Caco-2 (cell line): ENCODE measurements at regions of chr1 and their contacts with region 1.

Region 1: DNA sequence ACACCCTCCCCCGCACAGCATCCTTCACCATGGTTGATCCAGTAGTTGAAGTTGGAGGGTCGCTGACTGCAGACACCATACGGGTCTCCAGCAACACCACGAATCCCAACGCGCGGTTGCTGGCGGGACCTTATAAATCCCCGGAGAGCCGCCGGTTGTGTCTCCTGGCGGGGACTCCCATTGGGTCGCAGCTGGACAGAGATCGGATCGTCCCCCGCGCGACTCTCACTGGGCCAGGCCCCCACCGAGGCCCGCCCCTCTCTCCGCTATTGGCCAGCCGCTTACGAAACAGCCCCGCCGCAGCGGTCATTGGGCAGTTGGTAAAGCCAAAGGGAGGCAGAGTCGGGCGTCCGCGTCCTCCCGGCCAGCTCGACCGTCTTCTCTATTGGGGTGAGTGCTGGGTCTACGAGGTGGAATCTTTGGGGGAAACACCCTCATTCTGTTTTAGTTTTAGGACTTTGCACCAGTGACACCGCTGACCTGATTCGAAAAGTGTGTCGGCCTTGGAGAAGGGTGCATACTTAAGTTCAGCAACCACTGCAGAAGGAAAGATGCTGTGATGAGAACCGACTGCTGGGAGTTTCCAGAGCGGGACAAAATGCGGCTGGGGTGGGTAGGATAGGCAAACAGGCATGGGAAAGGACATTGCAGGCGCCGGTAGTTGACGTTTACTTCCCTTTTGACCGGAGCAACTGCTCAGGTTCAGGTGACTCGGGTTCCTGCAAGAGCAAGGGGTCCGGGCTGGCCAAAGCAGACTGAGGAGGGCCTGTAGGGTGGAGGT is 27.3 kb downstream of the RABIF start:
- DNase-seq: peak; percentile 96 to 97
- H3K4me3 ChIP-seq: peak overlapping the region; percentile 97
- H3K4me3 Mint-ChIP-seq: peak overlapping the region; percentile 97
- H3K27ac Mint-ChIP-seq: peak overlapping the region; percentile 95
- H3K4me1 ChIP-seq: peaks cover 62% of the 10 kb centered on the region
- H3K4me1 Mint-ChIP-seq: peaks cover 37% of the 10 kb centered on the region
- H3K27me3 ChIP-seq: no peaks in the 10 kb centered on the region
- H3K27me3 Mint-ChIP-seq: no peaks in the 10 kb centered on the region
- CTCF ChIP-seq: no peak

Region 2: DNA sequence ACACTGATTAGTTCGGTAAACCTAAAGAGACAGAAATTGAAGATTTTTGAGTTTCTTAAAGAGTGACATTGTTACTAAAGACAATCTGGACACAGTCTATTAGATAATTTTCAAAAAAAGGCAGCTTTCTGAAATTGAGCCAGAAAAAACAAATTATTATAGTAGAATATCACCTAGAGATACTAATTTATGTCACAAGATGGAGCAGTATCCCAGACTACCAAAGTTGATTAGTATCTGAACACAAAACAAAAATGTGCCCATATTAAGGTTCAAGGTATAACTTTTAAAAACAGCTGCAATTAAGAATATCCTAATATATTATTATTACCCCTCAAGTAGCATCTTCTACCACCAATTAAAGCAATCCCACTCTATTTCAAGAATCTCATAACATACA is 110.9 kb before region 1 on chr1:
- CTCF ChIA-PET with region 1: interaction called, 4 read pairs
- POLR2A ChIA-PET with region 1: no interaction called
- intact Hi-C with region 1: loop called (anchors 5 kb)
- DNase-seq: no peak
- H3K4me3 ChIP-seq: no peak overlapping the region
- H3K4me3 Mint-ChIP-seq: no peak overlapping the region
- H3K27ac Mint-ChIP-seq: no peak overlapping the region
- H3K4me1 ChIP-seq: no peaks in the 10 kb centered on the region
- H3K4me1 Mint-ChIP-seq: no peaks in the 10 kb centered on the region
- H3K27me3 ChIP-seq: no peaks in the 10 kb centered on the region
- H3K27me3 Mint-ChIP-seq: no peaks in the 10 kb centered on the region
- CTCF ChIP-seq: no peak

Region 3: GRCh38 chr1:202786804-202787203 is 74.8 kb before region 1 on chr1:
- CTCF ChIA-PET with region 1: no interaction called
- POLR2A ChIA-PET with region 1: no interaction called
- intact Hi-C with region 1: no loop called
- DNase-seq: no peak
- H3K4me3 ChIP-seq: no peak overlapping the region
- H3K4me3 Mint-ChIP-seq: no peak overlapping the region
- H3K27ac Mint-ChIP-seq: no peak overlapping the region
- H3K4me1 ChIP-seq: peaks cover 9% of the 10 kb centered on the region
- H3K4me1 Mint-ChIP-seq: peaks cover 18% of the 10 kb centered on the region
- H3K27me3 ChIP-seq: no peaks in the 10 kb centered on the region
- H3K27me3 Mint-ChIP-seq: no peaks in the 10 kb centered on the region
- CTCF ChIP-seq: no peak

Region 4: GRCh38 chr1:202888531-202889360 is 27.1 kb after region 1 on chr1 and contains the start of gene RABIF:
- CTCF ChIA-PET with region 1: interaction called, 7 read pairs
- POLR2A ChIA-PET with region 1: interaction called, 15 read pairs
- intact Hi-C with region 1: loop called (anchors 1 kb)
- DNase-seq: peak; percentile 96 to 97
- H3K4me3 ChIP-seq: peak within 1 kb of the TSS; percentile 52
- H3K4me3 Mint-ChIP-seq: peak within 1 kb of the TSS; percentile 80
- H3K27ac Mint-ChIP-seq: peak within 1 kb of the TSS; percentile 87
- H3K4me1 ChIP-seq: 0 out of 2 replicates have a peak, but pooled peaks cover 4% of the 10 kb centered on the region
- H3K4me1 Mint-ChIP-seq: peaks cover 15% of the 10 kb centered on the region
- H3K27me3 ChIP-seq: no peaks in the 10 kb centered on the region
- H3K27me3 Mint-ChIP-seq: no peaks in the 10 kb centered on the region
- CTCF ChIP-seq: peak in 1 of 2 experiments; percentile 41
- total RNA-seq, gene RABIF: 9.2 and 9.6 TPM in 2 replicates

Region 5: GRCh38 chr1:202957733-202958543 is 96.3 kb after region 1 on chr1 and contains the start of gene ADIPOR1:
- CTCF ChIA-PET with region 1: no interaction called
- POLR2A ChIA-PET with region 1: interaction called, 3 read pairs
- intact Hi-C with region 1: loop called (anchors 2 kb)
- DNase-seq: peak; percentile 94 to 95
- H3K4me3 ChIP-seq: peak within 1 kb of the TSS; percentile 75
- H3K4me3 Mint-ChIP-seq: peak within 1 kb of the TSS; percentile 82
- H3K27ac Mint-ChIP-seq: peak within 1 kb of the TSS; percentile 49
- H3K4me1 ChIP-seq: peaks cover 18% of the 10 kb centered on the region
- H3K4me1 Mint-ChIP-seq: peaks cover 20% of the 10 kb centered on the region
- H3K27me3 ChIP-seq: no peaks in the 10 kb centered on the region
- H3K27me3 Mint-ChIP-seq: no peaks in the 10 kb centered on the region
- CTCF ChIP-seq: peak in 1 of 2 experiments; percentile 31
- total RNA-seq, gene ADIPOR1: 68.3 and 71.4 TPM in 2 replicates

Region 6: DNA sequence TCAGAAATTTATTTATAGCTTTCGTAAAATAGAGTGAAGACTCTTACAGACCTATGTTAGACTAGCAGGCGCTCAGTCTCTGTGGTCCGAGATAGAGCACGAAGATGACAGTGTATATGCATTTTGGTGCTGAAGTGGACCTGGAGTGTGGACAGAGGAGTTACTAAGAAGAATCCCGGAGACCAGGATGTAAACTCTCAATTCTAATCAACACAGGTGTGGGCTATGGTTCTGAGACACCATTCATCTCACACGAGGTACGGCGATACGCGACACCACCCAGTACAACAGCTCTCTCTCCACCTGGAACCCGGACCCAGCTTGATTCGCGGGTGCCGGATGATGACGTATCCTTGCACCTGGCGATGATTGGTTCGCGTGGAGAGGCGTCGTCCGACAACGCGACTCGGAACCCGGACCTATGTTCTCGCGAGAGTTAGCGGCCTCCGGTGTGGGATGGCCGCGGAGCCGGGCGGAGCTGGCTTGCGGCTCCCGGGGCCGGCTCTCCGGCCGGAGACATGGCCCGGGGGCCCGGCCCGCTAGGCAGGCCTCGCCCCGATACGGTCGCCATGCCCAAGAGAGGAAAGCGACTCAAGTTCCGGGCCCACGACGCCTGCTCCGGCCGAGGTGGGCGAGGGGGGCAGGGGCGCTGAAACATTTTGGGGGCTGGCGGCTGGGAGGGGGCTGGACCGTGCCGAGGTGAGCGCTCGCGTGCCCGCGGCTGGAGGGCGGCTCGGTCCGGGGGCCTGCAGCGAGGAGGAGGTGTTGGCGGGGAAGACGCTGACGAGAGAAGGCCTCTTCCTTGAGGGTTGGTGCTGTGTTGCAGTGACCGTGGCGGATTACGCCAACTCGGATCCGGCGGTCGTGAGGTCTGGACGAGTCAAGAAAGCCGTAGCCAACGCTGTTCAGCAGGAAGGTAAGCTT is 145.6 kb after region 1 on chr1 and contains the start of gene TMEM183A:
- CTCF ChIA-PET with region 1: no interaction called
- POLR2A ChIA-PET with region 1: interaction called, 14 read pairs
- intact Hi-C with region 1: no loop called
- DNase-seq: peak; percentile 97 to 98
- H3K4me3 ChIP-seq: peak within 1 kb of the TSS; percentile 51
- H3K4me3 Mint-ChIP-seq: peak within 1 kb of the TSS; percentile 91
- H3K27ac Mint-ChIP-seq: peak within 1 kb of the TSS; percentile 88
- H3K4me1 ChIP-seq: peaks cover 5% of the 10 kb centered on the region; the same call in 1 of the 2 replicates
- H3K4me1 Mint-ChIP-seq: peaks cover 22% of the 10 kb centered on the region
- H3K27me3 ChIP-seq: no peaks in the 10 kb centered on the region
- H3K27me3 Mint-ChIP-seq: no peaks in the 10 kb centered on the region
- CTCF ChIP-seq: no peak
- total RNA-seq, gene TMEM183A: 62.8 and 74.3 TPM in 2 replicates